Posterior vena cava (tissue), 2 donors: ENCODE measurements at regions of chr5 and their contacts with region 1.

Region 1: GRCh38 chr5:143749581-143750205 is 62.3 kb upstream of the HMHB1 start:
- DNase-seq: no peak

Region 2: DNA sequence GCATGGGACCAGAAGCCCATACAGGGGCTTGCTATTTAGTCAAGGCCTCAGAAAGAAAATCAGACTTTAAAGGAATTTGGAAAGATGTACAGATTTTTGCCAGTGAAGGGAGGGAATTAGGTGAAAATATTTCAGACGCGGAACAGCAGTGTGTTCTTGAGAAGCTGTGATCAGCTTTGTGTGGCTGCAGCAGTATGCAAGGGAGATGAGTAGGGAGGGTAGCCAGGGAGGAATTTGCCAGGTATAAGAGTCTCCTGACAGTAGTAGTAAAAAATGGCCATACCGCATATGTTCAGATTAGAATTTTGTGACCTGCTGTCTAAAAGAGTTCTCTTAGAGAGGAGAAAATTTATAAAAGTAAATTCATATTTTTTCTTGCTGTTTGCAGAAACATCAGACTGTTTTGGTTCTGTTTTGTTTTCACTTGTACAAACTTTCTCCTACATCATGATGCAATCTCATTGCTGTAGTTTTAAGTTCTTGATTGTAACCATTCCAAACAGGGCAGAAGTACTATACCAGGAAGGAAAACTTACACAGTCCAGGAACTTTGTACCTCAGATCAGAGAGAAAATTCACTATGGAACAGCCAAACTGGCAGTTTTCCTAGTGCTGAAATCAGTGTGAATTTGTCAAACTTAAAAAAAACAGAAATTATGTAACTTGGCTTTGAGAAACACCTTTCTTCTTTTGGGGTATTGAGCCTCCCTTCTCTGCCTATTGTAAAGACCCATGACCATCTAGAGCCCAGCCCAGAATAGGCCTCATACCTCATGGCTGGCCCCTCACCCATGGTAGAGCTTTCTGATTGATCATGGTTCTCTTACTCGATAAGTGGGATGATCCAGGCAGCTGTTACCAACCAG is 267.8 kb before region 1 on chr5:
- intact Hi-C with region 1: no loop called
- DNase-seq: no peak

Region 3: GRCh38 chr5:143721925-143722324 is 27.8 kb before region 1 on chr5:
- intact Hi-C with region 1: loop called in 1 of 2 experiments (anchors 1 kb)
- DNase-seq: no peak

Region 4: GRCh38 chr5:143760137-143760505 is 10.4 kb after region 1 on chr5:
- intact Hi-C with region 1: no loop called
- DNase-seq: no peak